Mammary epithelial cell (primary cell): ENCODE measurements at regions of chr13 and their contacts with region 1.

Region 1: DNA sequence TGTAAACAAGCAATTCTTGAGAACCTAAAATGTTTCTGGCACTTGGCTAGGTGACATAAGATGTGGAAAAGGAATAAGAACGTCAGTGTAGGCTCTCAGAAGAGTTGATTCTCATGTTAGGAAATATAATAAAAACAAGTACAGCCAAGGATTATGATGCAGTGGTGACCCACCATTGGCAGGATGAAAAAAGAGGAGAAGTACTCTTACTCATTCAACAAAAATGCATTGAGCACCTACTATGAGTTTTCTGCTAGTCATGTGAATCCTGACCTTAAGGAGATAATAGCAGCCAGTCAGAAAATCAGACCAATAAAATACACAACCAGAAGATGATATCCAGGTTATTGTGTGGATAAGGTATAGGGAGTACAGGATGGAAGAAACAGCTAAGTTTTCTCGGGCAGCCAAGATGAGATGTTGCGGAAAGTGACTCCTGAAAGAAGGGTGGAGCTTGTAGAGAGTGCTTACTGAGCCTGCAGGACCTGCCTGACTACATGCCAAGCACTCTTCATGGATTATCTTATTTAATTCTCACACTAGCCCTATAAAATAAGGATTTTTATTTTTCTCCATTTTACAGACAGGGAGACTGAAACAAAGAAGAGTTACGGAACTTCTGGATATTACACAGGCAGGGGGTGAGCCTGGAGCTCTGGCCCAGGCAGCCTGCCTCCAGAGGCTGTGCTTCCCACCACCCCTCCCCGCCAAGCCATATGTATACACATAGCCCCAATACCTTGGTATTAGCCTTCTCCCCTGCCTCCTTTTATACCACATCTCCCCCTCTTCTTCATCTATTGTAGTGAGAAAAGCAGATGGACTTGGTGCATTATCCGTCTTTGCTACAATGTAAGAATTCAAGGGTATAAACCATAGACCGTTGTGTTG is 58.0 kb downstream of the TGDS start:
- DNase-seq: no peak
- H3K4me3 ChIP-seq: no peak overlapping the region
- H3K27ac ChIP-seq: no peak overlapping the region
- H3K4me1 ChIP-seq: no peaks in the 10 kb centered on the region
- H3K27me3 ChIP-seq: no peaks in the 10 kb centered on the region
- CTCF ChIP-seq: no peak

Region 2: DNA sequence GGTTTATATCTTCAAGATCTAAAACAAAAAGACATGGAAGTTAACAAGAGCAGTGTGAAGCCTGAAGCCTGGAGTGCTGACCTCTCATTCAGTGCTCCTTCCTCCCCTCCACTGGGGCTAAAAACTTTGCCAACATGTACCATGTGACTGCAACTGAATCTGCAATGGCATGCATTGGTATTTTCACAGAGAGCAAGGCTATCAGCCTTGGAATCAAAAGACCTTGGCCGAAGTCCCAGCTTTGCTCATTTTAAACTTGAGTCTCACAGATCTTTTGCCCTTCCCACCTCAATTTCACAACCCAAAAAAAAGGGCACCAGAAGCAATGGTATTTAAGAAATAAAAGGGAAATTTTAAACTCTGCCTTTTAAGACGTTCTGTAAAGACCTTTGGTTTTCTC is 383.6 kb before region 1 on chr13:
- CTCF ChIA-PET with region 1: no interaction called
- dilution Hi-C with region 1: no loop called
- in situ Hi-C with region 1: no loop called
- intact Hi-C with region 1: no loop called
- DNase-seq: peak; percentile 32
- H3K4me3 ChIP-seq: no peak overlapping the region
- H3K27ac ChIP-seq: no peak overlapping the region
- H3K4me1 ChIP-seq: no peaks in the 10 kb centered on the region
- H3K27me3 ChIP-seq: no peaks in the 10 kb centered on the region
- CTCF ChIP-seq: no peak

Region 3: GRCh38 chr13:94480672-94481145 is 57.3 kb before region 1 on chr13:
- CTCF ChIA-PET with region 1: no interaction called
- dilution Hi-C with region 1: loop called (anchors 5 kb)
- in situ Hi-C with region 1: no loop called
- intact Hi-C with region 1: no loop called
- DNase-seq: peak; percentile 6
- H3K4me3 ChIP-seq: no peak overlapping the region
- H3K27ac ChIP-seq: no peak overlapping the region
- H3K4me1 ChIP-seq: no peaks in the 10 kb centered on the region
- H3K27me3 ChIP-seq: peaks cover 2% of the 10 kb centered on the region
- CTCF ChIP-seq: no peak

Region 4: GRCh38 chr13:94739235-94739634 is 201.2 kb after region 1 on chr13:
- CTCF ChIA-PET with region 1: no interaction called
- dilution Hi-C with region 1: no loop called
- in situ Hi-C with region 1: no loop called
- intact Hi-C with region 1: no loop called
- DNase-seq: no peak
- H3K4me3 ChIP-seq: no peak overlapping the region
- H3K27ac ChIP-seq: no peak overlapping the region
- H3K4me1 ChIP-seq: no peaks in the 10 kb centered on the region
- H3K27me3 ChIP-seq: no peaks in the 10 kb centered on the region
- CTCF ChIP-seq: no peak